ENCODE measurements at regions of chrX and their contacts with region 1.

Region 1: GRCh38 chrX:10199212-10199611 is 42.4 kb downstream of the CLCN4 start:
- DNase-seq: no peak
- ATAC-seq: peak; percentile 92
- H3K4me3 Mint-ChIP-seq: peak overlapping the region; percentile 55
- H3K27ac Mint-ChIP-seq: peak overlapping the region; percentile 86
- H3K4me1 Mint-ChIP-seq: peaks cover 30% of the 10 kb centered on the region
- H3K27me3 Mint-ChIP-seq: no peaks in the 10 kb centered on the region
- CTCF ChIP-seq: no peak

Region 2: DNA sequence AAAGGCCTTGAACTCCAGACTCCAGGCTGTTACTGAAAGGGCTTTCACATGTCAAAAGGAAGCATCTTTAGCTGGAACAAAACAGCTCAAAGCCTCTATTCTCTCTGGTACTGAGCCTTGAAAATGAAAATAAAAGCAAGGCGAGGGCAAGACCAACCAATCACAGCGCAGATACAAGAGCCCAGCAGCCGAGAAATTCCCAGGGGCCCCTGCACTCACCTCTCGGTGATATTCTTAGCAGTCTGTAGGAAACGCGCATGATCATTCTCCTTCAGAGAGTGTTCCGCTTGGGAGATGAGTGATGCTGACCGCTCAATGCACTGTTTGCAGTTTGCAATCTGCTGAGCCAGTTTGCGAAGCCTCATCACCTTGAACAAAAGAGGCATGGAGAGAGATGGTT is 283.0 kb after region 1 on chrX:
- CTCF ChIA-PET with region 1: no interaction called
- POLR2A ChIA-PET with region 1: no interaction called
- intact Hi-C with region 1: loop called (anchors 5 kb)
- DNase-seq: peak; percentile 17
- ATAC-seq: peak; percentile 94
- H3K4me3 Mint-ChIP-seq: peak overlapping the region; percentile 73
- H3K27ac Mint-ChIP-seq: peak overlapping the region; percentile 78
- H3K4me1 Mint-ChIP-seq: peaks cover 11% of the 10 kb centered on the region
- H3K27me3 Mint-ChIP-seq: no peaks in the 10 kb centered on the region
- CTCF ChIP-seq: no peak

Region 3: DNA sequence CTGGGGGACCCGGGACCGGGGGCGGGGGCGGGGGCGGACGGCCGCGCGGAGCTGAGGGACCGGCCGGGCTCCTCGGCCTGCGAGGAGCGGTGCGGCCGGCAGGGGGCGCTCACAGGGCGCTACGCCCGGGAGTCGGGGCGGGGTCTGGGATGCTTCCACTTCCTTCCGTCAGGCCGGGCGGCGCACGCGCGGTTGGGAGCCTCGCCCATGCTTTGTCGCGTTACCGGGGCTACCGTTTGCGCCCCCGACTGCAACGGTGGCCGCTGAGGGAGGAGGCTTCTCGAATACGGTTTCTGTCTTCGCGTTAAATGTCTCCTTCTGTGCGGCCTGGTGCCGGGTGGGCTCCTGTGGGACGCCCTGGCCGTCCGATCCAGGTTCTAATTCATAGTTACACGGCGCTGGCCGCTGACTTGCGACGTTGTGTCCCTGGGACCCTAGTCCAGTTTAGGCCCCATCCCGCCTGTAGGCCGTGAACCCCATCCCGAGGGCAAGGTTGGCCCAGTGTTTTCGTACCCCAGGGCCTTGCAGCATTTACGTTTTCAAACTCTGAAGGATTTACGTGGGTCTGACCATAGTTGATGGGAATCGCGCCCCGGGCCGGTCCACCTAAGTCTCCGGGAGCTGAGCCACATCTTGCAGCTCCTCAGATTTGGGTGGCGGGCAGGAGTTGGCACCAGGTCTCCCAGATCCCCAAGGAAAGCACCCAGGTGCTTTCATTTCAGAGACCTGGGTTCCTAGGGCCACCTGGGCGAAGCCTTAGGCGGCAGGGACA is 1559.4 kb after region 1 on chrX:
- CTCF ChIA-PET with region 1: no interaction called
- POLR2A ChIA-PET with region 1: no interaction called
- intact Hi-C with region 1: loop called (anchors 5 kb)
- DNase-seq: peak; percentile 81
- ATAC-seq: peak; percentile 65
- H3K4me3 Mint-ChIP-seq: peak overlapping the region; percentile 94
- H3K27ac Mint-ChIP-seq: peak overlapping the region; percentile 95
- H3K4me1 Mint-ChIP-seq: peaks cover 35% of the 10 kb centered on the region
- H3K27me3 Mint-ChIP-seq: no peaks in the 10 kb centered on the region
- CTCF ChIP-seq: no peak